ENCODE measurements at regions of chr1 and their contacts with region 1.

Region 1: DNA sequence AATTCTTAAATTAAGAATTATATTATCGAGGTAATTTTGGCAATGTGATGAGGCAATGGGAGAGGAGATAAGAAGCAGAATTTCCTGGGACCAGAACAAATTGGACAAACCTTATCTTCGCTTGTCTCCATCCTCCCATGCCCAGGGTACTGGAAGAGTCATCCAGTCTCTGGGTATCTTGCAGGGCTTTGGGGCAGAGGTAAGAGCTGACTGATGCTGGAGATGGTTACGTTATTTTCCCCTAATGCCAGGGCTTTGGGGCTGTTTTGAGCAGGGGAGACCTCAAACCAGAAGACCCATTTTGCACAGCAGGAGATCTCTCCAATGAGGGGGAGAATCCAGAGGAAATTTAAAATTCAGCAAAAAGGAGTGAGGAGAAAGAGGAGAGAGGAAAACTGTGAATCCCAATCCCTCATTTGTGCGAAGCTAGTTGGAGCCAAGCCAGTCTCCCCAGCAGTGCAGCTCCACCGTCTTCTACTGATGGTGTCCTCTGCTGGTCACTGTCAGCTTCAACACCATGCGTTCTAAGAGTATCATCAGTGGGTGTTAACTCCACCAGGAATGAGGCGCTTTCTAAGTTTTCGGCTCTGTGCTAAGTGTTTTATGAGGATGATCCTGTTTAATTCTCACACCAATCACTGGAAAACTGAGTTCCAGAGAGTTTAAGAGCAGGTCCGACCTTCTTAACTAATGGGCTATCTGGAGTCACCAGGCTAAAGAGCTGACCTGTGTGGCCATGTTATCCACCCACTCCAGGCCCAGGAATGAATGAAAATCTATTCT is 86.8 kb upstream of the CD34 start:
- DNase-seq: peak; percentile 75
- H3K4me3 ChIP-seq: no peak overlapping the region
- H3K27ac ChIP-seq: no peak overlapping the region
- H3K4me1 ChIP-seq: no peaks in the 10 kb centered on the region
- H3K27me3 ChIP-seq: peaks cover 14 to 29% of the 10 kb centered on the region in 2 experiments
- CTCF ChIP-seq: peak; percentile 89 to 92
- POLR2A ChIP-seq: no peak

Region 2: GRCh38 chr1:207973898-207974568 is 23.6 kb before region 1 on chr1:
- CTCF ChIA-PET with region 1: interaction called, 11 read pairs
- POLR2A ChIA-PET with region 1: no interaction called
- dilution Hi-C with region 1: no loop called
- intact Hi-C with region 1: no loop called
- DNase-seq: no peak
- H3K4me3 ChIP-seq: no peak overlapping the region
- H3K27ac ChIP-seq: no peak overlapping the region
- H3K4me1 ChIP-seq: no peaks in the 10 kb centered on the region
- H3K27me3 ChIP-seq: peaks cover 24 to 26% of the 10 kb centered on the region in 2 experiments
- CTCF ChIP-seq: no peak
- POLR2A ChIP-seq: no peak

Region 3: DNA sequence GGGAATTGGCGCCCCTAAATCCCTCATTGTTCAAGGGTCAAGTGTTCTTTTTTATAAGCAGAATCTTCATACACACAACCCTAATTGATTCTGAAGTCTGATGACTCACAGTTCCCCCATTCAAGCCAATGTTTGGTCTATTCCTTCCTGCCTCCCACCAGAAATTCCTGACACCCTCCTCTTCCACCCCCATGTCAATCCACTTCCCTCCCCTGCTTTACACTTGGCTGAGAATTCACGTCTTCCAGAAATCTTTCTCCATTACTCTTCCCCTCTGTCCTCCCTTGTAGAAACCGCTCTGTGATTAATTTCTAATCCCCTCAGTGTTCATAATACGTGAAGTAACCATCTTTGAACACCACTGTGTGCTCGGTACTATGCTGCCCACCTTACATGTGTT is 10.5 kb before region 1 on chr1:
- CTCF ChIA-PET with region 1: interaction called, 13 read pairs
- POLR2A ChIA-PET with region 1: no interaction called
- dilution Hi-C with region 1: no loop called
- intact Hi-C with region 1: no loop called
- DNase-seq: peak; percentile 32
- H3K4me3 ChIP-seq: no peak overlapping the region
- H3K27ac ChIP-seq: no peak overlapping the region
- H3K4me1 ChIP-seq: no peaks in the 10 kb centered on the region
- H3K27me3 ChIP-seq: peaks cover 24 to 29% of the 10 kb centered on the region in 2 experiments
- CTCF ChIP-seq: no peak
- POLR2A ChIP-seq: no peak

Region 4: GRCh38 chr1:208013210-208013609 is 15.5 kb after region 1 on chr1:
- CTCF ChIA-PET with region 1: interaction called, 20 read pairs
- POLR2A ChIA-PET with region 1: no interaction called
- dilution Hi-C with region 1: no loop called
- intact Hi-C with region 1: no loop called
- DNase-seq: no peak
- H3K4me3 ChIP-seq: no peak overlapping the region
- H3K27ac ChIP-seq: no peak overlapping the region
- H3K4me1 ChIP-seq: no peaks in the 10 kb centered on the region
- H3K27me3 ChIP-seq: no peaks in the 10 kb centered on the region
- CTCF ChIP-seq: no peak
- POLR2A ChIP-seq: no peak

Measured in endothelial cell of umbilical vein (primary cell).